AG04450 (cell line): ENCODE measurements at regions of chr18 and their contacts with region 1.

Region 1: GRCh38 chr18:830315-830901 is 18.4 kb upstream of the YES1 start:
- DNase-seq: no peak
- H3K4me3 ChIP-seq: no peak overlapping the region
- H3K27ac ChIP-seq: no peak overlapping the region
- H3K27me3 ChIP-seq: peaks cover 3% of the 10 kb centered on the region
- CTCF ChIP-seq: no peak

Region 2: DNA sequence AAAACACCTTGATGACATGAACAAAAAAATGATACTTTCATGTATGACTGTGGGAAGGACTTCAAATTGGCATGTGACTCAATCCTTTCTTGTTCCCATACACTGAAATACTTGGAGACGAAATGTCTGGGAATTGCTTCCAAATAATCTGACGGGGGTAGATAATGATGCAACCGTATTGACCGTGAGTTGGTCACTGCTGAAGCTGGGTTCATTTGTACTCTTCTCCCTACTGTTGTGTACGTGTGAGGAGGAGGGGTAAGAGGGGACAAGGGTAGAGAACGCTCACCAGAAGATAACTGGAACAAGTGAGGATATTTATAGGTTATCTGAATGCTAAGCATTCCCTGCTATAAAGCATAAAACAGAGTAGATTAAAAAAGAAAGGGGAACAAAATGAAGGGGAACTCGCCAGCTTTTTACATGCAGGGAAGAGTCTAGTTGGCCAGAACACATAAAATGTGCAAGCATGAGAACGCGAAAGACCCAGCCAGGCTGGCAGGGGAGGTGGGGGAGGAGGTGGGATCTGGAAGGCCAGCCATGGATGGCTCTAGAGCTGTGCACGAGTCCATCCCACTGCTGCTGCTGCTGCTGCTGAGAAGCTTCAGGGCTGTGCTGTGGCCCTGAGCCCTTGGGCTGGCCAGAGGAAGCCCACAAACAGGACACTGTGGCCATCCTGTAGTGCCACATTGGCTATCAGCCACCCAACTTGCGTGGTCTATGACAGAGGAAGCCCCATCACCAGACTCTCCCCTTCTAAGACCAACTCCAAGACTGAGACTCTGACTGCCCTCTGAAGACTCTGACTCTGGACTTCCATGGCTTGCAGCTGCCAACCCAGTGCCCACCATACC is 265.5 kb before region 1 on chr18:
- CTCF ChIA-PET with region 1: no interaction called
- POLR2A ChIA-PET with region 1: no interaction called
- DNase-seq: no peak
- H3K4me3 ChIP-seq: no peak overlapping the region
- H3K27ac ChIP-seq: no peak overlapping the region
- H3K27me3 ChIP-seq: peaks cover 21% of the 10 kb centered on the region
- CTCF ChIP-seq: no peak

Region 3: GRCh38 chr18:623761-624620 is 206.4 kb before region 1 on chr18:
- CTCF ChIA-PET with region 1: interaction called, 178 read pairs
- POLR2A ChIA-PET with region 1: no interaction called
- DNase-seq: peak; percentile 56
- H3K4me3 ChIP-seq: no peak overlapping the region
- H3K27ac ChIP-seq: no peak overlapping the region
- H3K27me3 ChIP-seq: peaks cover 32% of the 10 kb centered on the region
- CTCF ChIP-seq: peak; percentile 77

Region 4: GRCh38 chr18:708096-708495 is 122.3 kb before region 1 on chr18:
- CTCF ChIA-PET with region 1: interaction called, 17 read pairs
- POLR2A ChIA-PET with region 1: no interaction called
- DNase-seq: no peak
- H3K4me3 ChIP-seq: no peak overlapping the region
- H3K27ac ChIP-seq: no peak overlapping the region
- H3K27me3 ChIP-seq: no peaks in the 10 kb centered on the region
- CTCF ChIP-seq: no peak

Region 5: DNA sequence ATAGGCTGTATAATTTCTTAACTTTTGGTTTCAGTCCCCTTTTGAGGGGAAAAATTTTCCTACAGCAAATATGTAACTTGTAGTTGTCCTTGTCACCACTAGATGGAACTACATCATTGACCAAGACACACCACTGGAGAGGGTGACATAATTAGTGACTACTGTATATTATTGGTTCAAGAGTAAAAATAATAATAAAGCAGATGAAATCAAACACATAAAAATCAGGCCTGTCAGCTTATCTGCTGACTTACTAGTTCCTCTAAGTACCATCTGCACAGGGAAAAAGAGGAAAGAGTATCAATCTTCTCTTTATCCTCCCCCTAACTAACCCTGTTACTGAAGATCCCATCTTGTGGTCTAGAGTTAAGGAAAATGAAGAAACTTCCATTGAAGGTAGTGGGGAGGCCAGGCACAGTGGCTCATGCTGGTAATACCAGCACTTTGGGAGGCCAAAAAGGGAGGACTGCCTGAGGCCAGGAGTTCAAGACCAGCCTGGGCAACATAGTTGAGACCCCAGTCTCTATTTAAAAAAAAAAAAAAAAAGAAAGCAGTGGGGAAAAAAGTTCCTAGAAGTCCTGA is 88.4 kb before region 1 on chr18:
- CTCF ChIA-PET with region 1: interaction called, 239 read pairs
- POLR2A ChIA-PET with region 1: no interaction called
- DNase-seq: peak; percentile 15
- H3K4me3 ChIP-seq: no peak overlapping the region
- H3K27ac ChIP-seq: no peak overlapping the region
- H3K27me3 ChIP-seq: no peaks in the 10 kb centered on the region
- CTCF ChIP-seq: peak; percentile 72

Region 6: GRCh38 chr18:799943-800342 is 30.5 kb before region 1 on chr18:
- CTCF ChIA-PET with region 1: interaction called, 10 read pairs
- POLR2A ChIA-PET with region 1: no interaction called
- DNase-seq: no peak
- H3K4me3 ChIP-seq: no peak overlapping the region
- H3K27ac ChIP-seq: no peak overlapping the region
- H3K27me3 ChIP-seq: no peaks in the 10 kb centered on the region
- CTCF ChIP-seq: no peak

Region 7: GRCh38 chr18:955379-956066 is 125.1 kb after region 1 on chr18:
- CTCF ChIA-PET with region 1: no interaction called
- POLR2A ChIA-PET with region 1: no interaction called
- DNase-seq: no peak
- H3K4me3 ChIP-seq: no peak overlapping the region
- H3K27ac ChIP-seq: no peak overlapping the region
- H3K27me3 ChIP-seq: no peaks in the 10 kb centered on the region
- CTCF ChIP-seq: no peak

Region 8: DNA sequence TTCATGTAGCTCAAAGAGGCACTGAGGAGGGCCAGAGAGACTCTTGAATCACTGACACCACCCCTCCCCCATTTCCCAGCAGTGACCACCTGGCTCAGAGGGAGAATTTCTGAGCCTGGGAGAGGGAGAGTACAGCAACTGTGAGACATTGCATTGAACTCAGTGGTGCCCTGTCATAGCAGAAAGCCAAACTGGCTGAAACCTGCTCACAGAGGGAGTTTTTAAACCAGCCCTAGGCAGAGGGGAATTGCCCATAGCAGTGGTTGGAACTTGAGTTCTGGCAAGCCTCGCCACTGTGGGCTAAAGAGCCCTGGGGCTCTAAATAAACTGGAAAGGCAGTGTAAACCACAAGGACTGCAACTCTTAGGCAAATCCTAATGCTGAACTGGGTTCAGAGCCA is 317.3 kb after region 1 on chr18:
- CTCF ChIA-PET with region 1: no interaction called
- POLR2A ChIA-PET with region 1: no interaction called
- DNase-seq: no peak
- H3K4me3 ChIP-seq: no peak overlapping the region
- H3K27ac ChIP-seq: no peak overlapping the region
- H3K27me3 ChIP-seq: no peaks in the 10 kb centered on the region
- CTCF ChIP-seq: no peak

Region 9: DNA sequence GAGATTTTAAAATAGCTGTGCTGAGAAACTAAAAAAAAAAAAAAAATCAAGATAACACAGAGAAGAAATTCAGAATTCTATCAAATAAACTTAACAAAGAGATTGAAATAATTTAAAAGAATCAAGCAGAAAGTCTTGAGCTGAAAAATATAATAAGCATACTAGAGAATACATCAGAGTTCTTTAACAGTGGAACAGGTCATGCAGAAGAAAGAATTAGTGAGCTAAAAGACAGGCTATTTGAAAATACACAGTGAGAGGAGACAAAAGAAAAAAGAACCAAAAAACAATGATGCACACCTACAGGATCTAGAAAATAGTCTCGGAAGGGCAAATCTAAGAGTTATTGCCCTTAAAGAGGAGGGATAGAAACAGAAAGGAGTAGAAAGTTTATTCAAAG is 622.4 kb after region 1 on chr18:
- CTCF ChIA-PET with region 1: no interaction called
- POLR2A ChIA-PET with region 1: no interaction called
- DNase-seq: no peak
- H3K4me3 ChIP-seq: no peak overlapping the region
- H3K27ac ChIP-seq: no peak overlapping the region
- H3K27me3 ChIP-seq: no peaks in the 10 kb centered on the region
- CTCF ChIP-seq: no peak